CD8-positive, alpha-beta T cell (primary cell): ENCODE measurements at regions of chr19 and their contacts with region 1.

Region 1: GRCh38 chr19:5827891-5828660 is 11.4 kb downstream of the FUT6 start:
- DNase-seq: peak; percentile 82 to 98 (median 90)
- ATAC-seq: peak; percentile 82
- H3K4me3 ChIP-seq: peak overlapping the region; percentile 56 to 70
- H3K4me3 Mint-ChIP-seq: peak overlapping the region; percentile 97
- H3K27ac ChIP-seq: peak overlapping the region; percentile 62 to 70
- H3K27ac Mint-ChIP-seq: peak overlapping the region; percentile 98
- H3K4me1 ChIP-seq: peaks cover 23% of the 10 kb centered on the region
- H3K4me1 Mint-ChIP-seq: peaks cover 15% of the 10 kb centered on the region
- H3K27me3 ChIP-seq: peaks cover 0 to 4% of the 10 kb centered on the region in 2 experiments
- H3K27me3 Mint-ChIP-seq: peaks cover 2% of the 10 kb centered on the region
- CTCF ChIP-seq: no peak

Region 2: GRCh38 chr19:5864725-5865486 is 36.8 kb after region 1 on chr19:
- CTCF ChIA-PET with region 1: no interaction called
- POLR2A ChIA-PET with region 1: no interaction called
- intact Hi-C with region 1: no loop called
- DNase-seq: peak in 2 of 9 experiments; percentile 17 to 20
- ATAC-seq: no peak
- H3K4me3 ChIP-seq: no peak overlapping the region
- H3K4me3 Mint-ChIP-seq: no peak overlapping the region
- H3K27ac ChIP-seq: no peak overlapping the region
- H3K27ac Mint-ChIP-seq: no peak overlapping the region
- H3K4me1 ChIP-seq: no peaks in the 10 kb centered on the region
- H3K4me1 Mint-ChIP-seq: no peaks in the 10 kb centered on the region
- H3K27me3 ChIP-seq: no peaks in the 10 kb centered on the region
- H3K27me3 Mint-ChIP-seq: peaks cover 2% of the 10 kb centered on the region
- CTCF ChIP-seq: no peak

Region 3: GRCh38 chr19:5961969-5962945 is 134.2 kb after region 1 on chr19:
- CTCF ChIA-PET with region 1: no interaction called
- POLR2A ChIA-PET with region 1: interaction called, 15 read pairs
- intact Hi-C with region 1: no loop called
- DNase-seq: peak; percentile 62 to 93 (median 81)
- ATAC-seq: peak; percentile 92
- H3K4me3 ChIP-seq: peak overlapping the region; percentile 22 to 29
- H3K4me3 Mint-ChIP-seq: peak overlapping the region; percentile 78
- H3K27ac ChIP-seq: peak overlapping the region; percentile 81 to 89
- H3K27ac Mint-ChIP-seq: peak overlapping the region; percentile 100
- H3K4me1 ChIP-seq: peaks cover 96% of the 10 kb centered on the region
- H3K4me1 Mint-ChIP-seq: peaks cover 91% of the 10 kb centered on the region
- H3K27me3 ChIP-seq: no peaks in the 10 kb centered on the region
- H3K27me3 Mint-ChIP-seq: no peaks in the 10 kb centered on the region
- CTCF ChIP-seq: peak; percentile 23